ENCODE measurements at regions of chr6 and their contacts with region 1.

Region 1: DNA sequence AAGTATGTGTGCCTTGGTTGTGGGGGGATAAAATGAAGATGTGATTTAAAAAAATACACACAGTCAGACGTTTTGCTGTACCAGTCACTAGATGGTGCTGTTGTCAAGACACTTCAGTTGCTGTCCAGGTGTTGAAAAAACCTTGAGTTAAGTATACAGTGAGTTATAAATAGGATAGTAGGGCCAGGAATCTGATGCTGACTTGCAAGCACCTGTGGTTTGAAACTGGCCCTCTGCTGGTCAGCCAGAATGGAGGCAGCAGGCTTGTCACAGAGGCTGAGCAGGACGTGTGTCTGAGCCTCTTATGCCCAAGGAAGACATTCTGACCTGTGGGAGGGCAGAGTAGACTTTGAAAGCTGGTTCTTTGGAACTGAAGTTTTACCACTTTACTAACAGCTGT is 27.8 kb downstream of the RNF8 start:
- DNase-seq: no peak
- ATAC-seq: peak in 3 of 4 donors; percentile 45 to 62 (median 53)
- H3K4me3 ChIP-seq: no peak overlapping the region
- H3K27ac ChIP-seq: no peak overlapping the region
- H3K4me1 ChIP-seq: no peaks in the 10 kb centered on the region
- H3K27me3 ChIP-seq: no peaks in the 10 kb centered on the region
- CTCF ChIP-seq: peak; percentile 38 to 68 (median 54)
- POLR2A ChIP-seq: no peak

Region 2: DNA sequence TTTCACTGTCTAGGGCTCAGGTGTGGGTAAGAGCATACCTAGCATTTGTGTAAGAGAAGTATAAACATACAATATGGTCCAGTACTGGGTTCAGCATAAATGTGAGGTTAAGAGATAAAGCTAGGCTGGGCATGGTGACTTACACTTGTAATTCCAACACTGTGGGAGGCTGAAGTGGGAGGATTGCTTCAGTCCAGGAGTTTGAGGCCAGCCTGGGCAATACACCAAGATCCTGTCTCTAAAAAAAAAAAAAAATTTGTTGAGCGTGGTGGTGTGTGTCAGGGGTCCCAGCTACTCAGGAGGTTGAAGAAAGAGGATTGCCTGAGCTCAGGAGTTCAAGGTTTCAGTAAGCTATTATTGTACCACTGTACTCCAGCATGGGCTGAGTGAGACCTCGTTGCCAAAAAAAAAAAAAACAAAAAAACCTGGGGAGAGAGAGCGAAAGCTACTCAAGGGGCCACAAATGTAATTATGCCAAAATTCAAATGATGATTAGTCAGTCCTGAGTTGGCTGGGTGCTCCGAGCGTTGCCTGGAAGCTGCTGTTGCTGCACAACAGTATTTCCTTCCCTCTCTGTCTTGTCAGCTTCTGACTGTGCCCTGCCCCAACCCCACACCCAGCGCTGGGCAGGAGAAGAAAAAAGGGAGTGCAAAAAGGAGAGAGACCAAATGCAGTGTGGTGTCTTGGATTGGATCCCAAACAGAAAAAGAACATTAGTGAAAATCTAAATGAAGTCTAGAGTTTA is 75.4 kb after region 1 on chr6:
- intact Hi-C with region 1: loop called in 1 of 10 experiments (anchors 10 kb)
- DNase-seq: no peak
- ATAC-seq: peak in 3 of 4 donors; percentile 55 to 71 (median 67)
- H3K4me3 ChIP-seq: no peak overlapping the region
- H3K27ac ChIP-seq: no peak overlapping the region
- H3K4me1 ChIP-seq: peaks cover 0 to 3% (median 0%) of the 10 kb centered on the region in 12 donors
- H3K27me3 ChIP-seq: no peaks in the 10 kb centered on the region
- CTCF ChIP-seq: no peak
- POLR2A ChIP-seq: no peak

Region 3: DNA sequence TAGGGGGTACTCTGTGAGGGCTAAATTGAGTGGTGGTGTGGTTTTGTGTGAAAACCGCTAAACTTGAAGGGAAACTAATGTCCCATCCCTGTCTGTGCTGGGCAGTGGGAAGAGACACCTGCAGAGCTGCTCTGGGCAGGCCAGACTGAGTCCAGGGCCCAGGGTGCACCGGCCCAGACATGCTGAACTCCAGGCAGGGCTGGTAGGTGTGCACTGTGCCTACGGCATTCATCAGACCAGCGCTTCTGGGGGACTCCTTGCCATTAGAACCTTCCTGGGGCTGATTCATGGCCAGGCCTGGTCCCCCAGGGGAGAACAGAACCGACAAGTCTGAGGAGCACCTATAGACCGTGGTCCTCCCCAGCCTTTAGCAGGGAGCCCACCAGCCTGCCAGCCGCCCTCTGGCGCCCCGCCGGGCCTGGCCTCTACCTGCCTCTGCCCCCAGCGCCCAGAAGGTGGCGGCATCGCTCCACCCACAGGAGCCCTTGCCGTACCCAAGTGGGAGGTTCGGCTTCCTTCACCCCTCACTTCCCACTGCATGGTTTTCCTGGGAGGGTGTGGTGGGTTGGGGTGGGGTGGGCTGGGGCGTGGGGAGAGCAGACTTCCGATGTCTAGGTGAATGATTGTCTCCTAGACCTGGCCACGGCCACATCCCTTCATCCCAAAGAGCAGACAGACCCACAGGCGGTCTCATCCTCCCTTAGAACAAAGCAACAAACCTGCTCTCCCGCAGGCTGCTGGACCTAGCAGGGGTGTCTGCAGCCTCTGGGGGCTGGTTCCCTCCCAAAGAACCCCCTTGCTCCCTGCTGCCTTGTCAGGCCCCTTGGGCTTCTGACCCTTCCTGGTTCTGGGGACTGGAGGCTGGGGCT is 102.6 kb after region 1 on chr6:
- intact Hi-C with region 1: loop called in 2 of 10 experiments (anchors 10 kb)
- DNase-seq: peak; percentile 53 to 81 (median 60)
- ATAC-seq: peak; percentile 28 to 72 (median 64)
- H3K4me3 ChIP-seq: no peak overlapping the region
- H3K27ac ChIP-seq: no peak overlapping the region
- H3K4me1 ChIP-seq: peaks cover 0 to 39% (median 8%) of the 10 kb centered on the region in 12 donors
- H3K27me3 ChIP-seq: no peaks in the 10 kb centered on the region
- CTCF ChIP-seq: peak; percentile 65 to 83 (median 76)
- POLR2A ChIP-seq: no peak

Measured in heart left ventricle (tissue), 16 donors.